ENCODE measurements at regions of chr3 and their contacts with region 1.

Region 1: DNA sequence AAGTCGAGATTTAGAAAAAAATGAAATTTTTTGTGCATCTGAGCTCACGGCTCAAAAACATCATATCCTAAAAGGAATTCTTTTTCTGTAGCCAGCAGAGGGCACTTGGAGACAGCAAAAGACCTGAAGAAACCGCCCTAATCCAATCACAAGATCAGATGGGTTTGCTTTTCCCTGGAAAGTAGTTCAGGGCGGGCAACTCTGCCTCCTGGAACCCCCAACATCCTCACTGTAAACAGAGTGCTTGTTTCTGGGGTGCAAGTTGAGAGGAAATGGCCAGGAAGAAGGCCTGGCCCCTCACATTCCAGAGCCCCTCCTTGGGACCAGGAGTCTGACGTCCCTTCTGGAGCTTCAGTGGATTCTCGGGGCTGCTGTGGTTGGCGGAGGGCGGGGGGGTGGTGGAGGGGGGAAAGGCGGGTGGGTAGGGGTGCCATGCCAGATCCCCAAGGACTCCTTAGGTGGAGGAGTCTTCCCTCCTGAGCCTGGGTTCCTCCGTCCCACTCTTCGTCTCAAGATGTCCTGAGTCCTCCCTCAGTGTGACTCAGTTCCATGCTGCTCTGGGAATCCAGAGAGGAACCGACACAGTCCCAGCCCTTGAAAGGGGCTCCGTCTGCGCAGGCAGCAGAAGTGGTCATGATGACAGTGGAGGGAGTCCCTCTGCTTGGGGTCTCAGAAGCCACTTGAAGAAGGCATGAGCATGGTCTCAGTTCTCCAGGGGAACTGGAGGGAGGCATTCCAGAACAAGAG is 35.9 kb downstream of the CCK start:
- DNase-seq: no peak
- ATAC-seq: peak in 1 of 2 donors; percentile 41
- H3K4me3 ChIP-seq: no peak overlapping the region
- H3K27ac ChIP-seq: no peak overlapping the region
- H3K4me1 ChIP-seq: no peaks in the 10 kb centered on the region
- H3K27me3 ChIP-seq: no peaks in the 10 kb centered on the region

Region 2: DNA sequence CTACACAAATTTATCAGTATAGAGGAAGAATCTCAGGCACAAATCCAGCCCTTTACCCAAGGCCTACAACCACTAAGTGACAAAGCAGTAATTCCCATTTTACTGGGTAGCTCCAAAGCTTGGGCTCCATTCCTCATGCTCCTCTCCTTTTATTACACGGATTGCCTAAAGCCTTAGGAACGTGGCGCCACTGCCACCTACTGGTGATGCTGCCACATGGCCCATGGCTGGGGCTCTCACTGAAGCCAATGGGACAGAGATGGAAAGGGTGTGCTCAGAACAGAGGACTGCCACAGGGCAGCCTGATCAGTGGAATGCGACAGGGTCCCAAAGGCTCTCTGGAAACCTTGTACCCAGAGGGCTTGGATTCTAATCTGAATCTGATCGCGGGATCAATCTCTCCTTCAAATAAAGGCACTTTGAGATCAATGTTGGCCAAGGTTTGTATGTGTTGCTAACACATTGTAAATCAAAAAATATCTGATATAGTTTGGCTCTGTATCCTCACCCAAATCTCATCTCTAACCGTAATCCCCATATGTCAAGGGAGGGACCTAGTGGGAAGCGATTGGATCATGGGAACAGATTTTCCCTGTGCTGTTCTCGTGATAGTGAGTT is 213.8 kb after region 1 on chr3:
- intact Hi-C with region 1: loop called in 1 of 4 experiments (anchors 5 kb)
- DNase-seq: peak; percentile 77 to 93 (median 92)
- ATAC-seq: peak; percentile 93 to 96
- H3K4me3 ChIP-seq: no peak overlapping the region
- H3K27ac ChIP-seq: no peak overlapping the region
- H3K4me1 ChIP-seq: no peaks in the 10 kb centered on the region
- H3K27me3 ChIP-seq: no peaks in the 10 kb centered on the region

Region 3: GRCh38 chr3:42547401-42547945 is 317.4 kb after region 1 on chr3:
- intact Hi-C with region 1: loop called in 1 of 4 experiments (anchors 5 kb)
- DNase-seq: peak; percentile 67 to 89 (median 86)
- ATAC-seq: peak; percentile 50 to 63
- H3K4me3 ChIP-seq: no peak overlapping the region
- H3K27ac ChIP-seq: no peak overlapping the region
- H3K4me1 ChIP-seq: peaks cover 5% of the 10 kb centered on the region
- H3K27me3 ChIP-seq: no peaks in the 10 kb centered on the region

Measured in right cardiac atrium (tissue), 5 donors.